Activated CD4-positive, alpha-beta memory T cell treated with anti-CD3 and anti-CD28 coated beads, Interleukin-2, amount 10 ng/mL, durations not matched to agents 7 days and 5 days (primary cell): ENCODE measurements at regions of chr1 and their contacts with region 1.

Region 1: DNA sequence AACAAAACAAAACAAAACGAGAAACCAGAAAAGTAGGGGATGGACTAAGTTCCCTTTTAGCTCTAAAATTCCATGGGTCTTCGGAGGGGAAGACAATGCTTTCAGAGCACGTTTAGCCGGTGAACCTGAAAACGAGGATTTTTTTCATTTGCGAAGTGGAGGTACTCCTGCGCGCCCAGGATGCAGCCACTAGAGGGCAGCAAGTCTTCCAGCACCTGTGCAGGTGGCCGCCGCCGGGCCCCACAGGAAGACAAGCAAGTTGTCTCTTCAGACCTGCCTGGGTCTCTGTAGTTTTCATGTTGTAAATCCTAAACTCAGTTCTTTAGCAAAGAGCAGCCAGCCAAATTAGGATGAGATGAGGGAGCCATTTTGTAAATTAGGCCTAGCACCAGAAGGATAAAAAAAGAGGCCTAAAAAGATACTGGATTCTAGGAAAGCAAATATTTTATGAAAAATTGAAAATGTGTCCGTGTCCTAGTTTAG is 17.7 kb upstream of the SNX27 start:
- DNase-seq: peak; percentile 87
- H3K4me3 Mint-ChIP-seq: no peak overlapping the region
- H3K27ac Mint-ChIP-seq: peak overlapping the region; percentile 16
- H3K4me1 Mint-ChIP-seq: peaks cover 9% of the 10 kb centered on the region
- H3K27me3 Mint-ChIP-seq: peaks cover 20% of the 10 kb centered on the region

Region 2: GRCh38 chr1:151482017-151482416 is 112.2 kb before region 1 on chr1:
- CTCF ChIA-PET with region 1: no interaction called
- POLR2A ChIA-PET with region 1: no interaction called
- DNase-seq: no peak
- H3K4me3 Mint-ChIP-seq: no peak overlapping the region
- H3K27ac Mint-ChIP-seq: no peak overlapping the region
- H3K4me1 Mint-ChIP-seq: no peaks in the 10 kb centered on the region
- H3K27me3 Mint-ChIP-seq: no peaks in the 10 kb centered on the region

Region 3: GRCh38 chr1:151579436-151579835 is 14.7 kb before region 1 on chr1:
- CTCF ChIA-PET with region 1: interaction called, 11 read pairs
- POLR2A ChIA-PET with region 1: interaction called, 3 read pairs
- DNase-seq: no peak
- H3K4me3 Mint-ChIP-seq: no peak overlapping the region
- H3K27ac Mint-ChIP-seq: no peak overlapping the region
- H3K4me1 Mint-ChIP-seq: peaks cover 35% of the 10 kb centered on the region
- H3K27me3 Mint-ChIP-seq: no peaks in the 10 kb centered on the region

Region 4: DNA sequence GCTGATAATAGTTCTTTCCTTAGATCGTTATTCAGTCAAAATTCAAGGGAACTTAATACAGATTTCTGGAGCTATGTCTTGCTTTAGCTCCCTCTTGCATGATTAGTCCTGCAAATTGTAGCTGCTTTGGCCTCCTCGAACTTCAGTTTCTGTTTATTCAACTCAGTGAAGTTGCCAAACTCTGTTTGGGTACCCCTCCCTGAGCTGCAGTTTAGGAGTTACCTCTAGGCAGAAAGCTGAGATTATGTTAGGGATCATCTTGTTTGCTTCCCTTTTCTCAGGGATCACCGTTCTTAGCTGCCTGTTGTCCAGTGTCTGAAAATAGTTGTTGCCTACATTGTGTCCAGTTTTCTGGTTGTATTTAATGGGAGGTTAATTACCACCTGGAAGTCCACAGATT is 61.2 kb after region 1 on chr1:
- CTCF ChIA-PET with region 1: interaction called, 11 read pairs
- POLR2A ChIA-PET with region 1: no interaction called
- DNase-seq: no peak
- H3K4me3 Mint-ChIP-seq: no peak overlapping the region
- H3K27ac Mint-ChIP-seq: no peak overlapping the region
- H3K4me1 Mint-ChIP-seq: peaks cover 17% of the 10 kb centered on the region
- H3K27me3 Mint-ChIP-seq: no peaks in the 10 kb centered on the region

Region 5: DNA sequence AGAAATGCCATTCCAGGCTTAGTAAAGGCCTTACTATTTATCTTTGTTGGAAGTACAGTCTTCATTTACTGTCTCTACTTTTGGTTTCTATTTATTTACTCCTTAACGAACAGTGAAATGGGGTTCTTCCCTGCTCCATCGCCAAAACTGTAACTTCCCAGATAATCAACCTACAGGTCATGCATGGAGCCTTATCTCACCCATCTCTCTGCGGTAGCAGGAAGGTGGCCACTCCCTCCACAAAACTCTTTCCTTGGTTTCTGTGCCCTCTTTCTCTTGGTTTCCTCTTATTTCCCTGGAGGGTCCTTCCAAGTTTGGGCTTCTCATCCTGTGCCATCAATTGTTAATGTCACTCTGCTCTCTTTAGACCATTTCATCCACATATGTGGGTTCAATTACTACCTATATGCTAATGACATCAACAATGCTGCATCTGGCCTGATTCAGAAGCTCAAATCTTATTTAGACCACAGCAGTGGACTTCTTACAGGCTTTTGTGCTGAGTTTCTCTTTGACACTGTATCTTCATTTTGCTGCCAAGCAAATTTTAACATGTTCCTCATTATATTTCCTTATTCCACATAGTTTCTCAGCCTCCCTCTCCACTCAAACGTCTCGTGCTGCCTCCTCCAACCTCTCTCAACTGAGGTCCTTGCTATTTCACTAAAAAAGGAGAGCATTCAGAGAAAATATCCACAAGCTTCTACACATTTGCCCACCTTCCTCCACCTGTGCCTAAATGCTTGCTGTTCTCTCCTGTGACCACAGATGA is 189.4 kb after region 1 on chr1:
- CTCF ChIA-PET with region 1: no interaction called
- POLR2A ChIA-PET with region 1: no interaction called
- DNase-seq: no peak
- H3K4me3 Mint-ChIP-seq: no peak overlapping the region
- H3K27ac Mint-ChIP-seq: no peak overlapping the region
- H3K4me1 Mint-ChIP-seq: peaks cover under 1% of the 10 kb centered on the region
- H3K27me3 Mint-ChIP-seq: no peaks in the 10 kb centered on the region